ENCODE measurements at regions of chr20 and their contacts with region 1.

Region 1: GRCh38 chr20:3312940-3313682 is 74.1 kb upstream of the SLC4A11 start:
- DNase-seq: no peak
- ATAC-seq: no peak
- H3K4me3 ChIP-seq: no peak overlapping the region
- H3K4me3 Mint-ChIP-seq: no peak overlapping the region
- H3K27ac ChIP-seq: no peak overlapping the region
- H3K27ac Mint-ChIP-seq: no peak overlapping the region
- H3K4me1 ChIP-seq: no peaks in the 10 kb centered on the region
- H3K4me1 Mint-ChIP-seq: peaks cover 0 to 1% (median 0%) of the 10 kb centered on the region in 3 donors
- H3K27me3 ChIP-seq: peaks cover 0 to 3% of the 10 kb centered on the region in 2 experiments
- H3K27me3 Mint-ChIP-seq: no peaks in the 10 kb centered on the region

Region 2: DNA sequence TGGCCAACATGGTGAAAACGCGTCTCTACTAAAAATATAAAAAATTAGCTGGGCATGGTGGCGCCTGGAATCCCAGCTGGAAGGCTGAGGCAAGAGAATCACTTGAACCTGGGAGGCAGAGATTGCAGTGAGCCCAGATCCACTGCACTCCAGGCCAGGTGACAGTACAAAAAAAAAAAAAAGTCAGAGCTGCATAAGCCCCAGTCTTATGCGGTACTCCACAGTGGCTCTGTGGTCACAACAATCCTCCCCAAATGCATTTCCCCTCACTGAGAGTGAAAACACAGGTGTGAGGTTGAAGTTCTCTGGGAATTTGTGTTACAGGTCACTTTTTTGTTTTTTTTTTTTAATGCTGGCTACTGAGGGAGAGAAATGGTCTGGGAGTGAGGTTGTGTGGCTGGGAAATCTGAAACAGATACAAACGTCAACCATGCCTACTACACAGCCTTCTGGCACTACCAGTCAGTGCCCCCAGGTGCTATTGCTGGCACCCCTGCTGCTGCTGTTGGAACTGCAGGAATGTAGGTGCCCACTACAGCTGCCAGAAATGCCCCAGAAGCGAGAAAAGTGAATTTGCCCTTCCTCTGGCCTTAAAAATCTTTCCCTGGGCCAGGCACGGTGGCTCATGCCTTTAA is 261.6 kb before region 1 on chr20:
- CTCF ChIA-PET with region 1: interaction called in 1 of 2 experiments, 21 read pairs
- POLR2A ChIA-PET with region 1: no interaction called
- DNase-seq: no peak
- ATAC-seq: peak in 1 of 4 experiments; percentile 48
- H3K4me3 ChIP-seq: no peak overlapping the region
- H3K4me3 Mint-ChIP-seq: no peak overlapping the region
- H3K27ac ChIP-seq: no peak overlapping the region
- H3K27ac Mint-ChIP-seq: peak overlapping the region in 1 of 2 donors; percentile 44
- H3K4me1 ChIP-seq: peaks cover 4 to 14% of the 10 kb centered on the region in 2 experiments
- H3K4me1 Mint-ChIP-seq: peaks cover 8 to 14% (median 12%) of the 10 kb centered on the region in 3 donors
- H3K27me3 ChIP-seq: no peaks in the 10 kb centered on the region
- H3K27me3 Mint-ChIP-seq: no peaks in the 10 kb centered on the region

Region 3: DNA sequence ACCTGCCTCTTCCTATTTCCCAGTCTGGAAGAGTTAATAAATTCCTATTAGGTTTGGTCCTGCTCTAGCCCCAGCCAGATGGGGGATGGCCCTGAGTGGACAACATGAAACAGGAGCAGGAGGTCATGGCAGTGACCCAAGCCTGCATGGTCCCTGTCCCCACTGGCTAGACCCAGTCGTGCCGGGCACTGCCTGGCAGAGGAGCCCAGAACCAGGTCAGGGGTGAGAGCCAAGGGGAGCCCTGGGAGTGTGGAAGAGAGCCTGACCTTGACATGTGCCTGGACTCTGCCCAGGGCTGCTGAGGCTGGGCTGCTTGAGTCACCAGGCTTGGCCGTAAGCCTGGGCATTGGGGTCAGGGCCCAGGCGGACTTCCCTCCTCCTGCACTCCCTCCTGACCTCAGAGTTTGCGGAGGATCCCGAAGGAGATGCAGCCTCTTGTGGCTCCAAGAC is 232.1 kb before region 1 on chr20:
- CTCF ChIA-PET with region 1: no interaction called
- POLR2A ChIA-PET with region 1: no interaction called
- DNase-seq: no peak
- ATAC-seq: no peak
- H3K4me3 ChIP-seq: no peak overlapping the region
- H3K4me3 Mint-ChIP-seq: peak overlapping the region in 1 of 3 donors; percentile 63
- H3K27ac ChIP-seq: no peak overlapping the region
- H3K27ac Mint-ChIP-seq: no peak overlapping the region
- H3K4me1 ChIP-seq: peaks cover 0 to 25% of the 10 kb centered on the region in 2 experiments
- H3K4me1 Mint-ChIP-seq: peaks cover 19 to 26% (median 25%) of the 10 kb centered on the region in 3 donors
- H3K27me3 ChIP-seq: peaks cover 0 to 52% of the 10 kb centered on the region in 2 experiments
- H3K27me3 Mint-ChIP-seq: peaks cover 18 to 47% of the 10 kb centered on the region in 2 donors

Region 4: GRCh38 chr20:3218307-3218988 is 94.7 kb before region 1 on chr20:
- CTCF ChIA-PET with region 1: interaction called, 4 to 23 read pairs
- POLR2A ChIA-PET with region 1: interaction called in 1 of 2 experiments, 4 read pairs
- DNase-seq: peak; percentile 16 to 81 (median 65)
- ATAC-seq: peak; percentile 60 to 82 (median 72)
- H3K4me3 ChIP-seq: no peak overlapping the region
- H3K4me3 Mint-ChIP-seq: no peak overlapping the region
- H3K27ac ChIP-seq: no peak overlapping the region
- H3K27ac Mint-ChIP-seq: no peak overlapping the region
- H3K4me1 ChIP-seq: peaks cover 7 to 24% of the 10 kb centered on the region in 2 experiments
- H3K4me1 Mint-ChIP-seq: peaks cover 9 to 19% (median 16%) of the 10 kb centered on the region in 3 donors
- H3K27me3 ChIP-seq: no peaks in the 10 kb centered on the region
- H3K27me3 Mint-ChIP-seq: no peaks in the 10 kb centered on the region

Region 5: GRCh38 chr20:3328501-3328900 is 15.4 kb after region 1 on chr20:
- CTCF ChIA-PET with region 1: interaction called, 3 to 11 read pairs
- POLR2A ChIA-PET with region 1: no interaction called
- DNase-seq: peak in 3 of 35 experiments; percentile 4 to 37 (median 4)
- ATAC-seq: peak; percentile 60 to 92 (median 82)
- H3K4me3 ChIP-seq: no peak overlapping the region
- H3K4me3 Mint-ChIP-seq: peak overlapping the region in 2 of 3 donors; percentile 22 to 60
- H3K27ac ChIP-seq: no peak overlapping the region
- H3K27ac Mint-ChIP-seq: peak overlapping the region; percentile 45 to 66
- H3K4me1 ChIP-seq: peaks cover 13 to 19% of the 10 kb centered on the region in 2 experiments
- H3K4me1 Mint-ChIP-seq: peaks cover 18 to 47% (median 24%) of the 10 kb centered on the region in 3 donors
- H3K27me3 ChIP-seq: no peaks in the 10 kb centered on the region
- H3K27me3 Mint-ChIP-seq: no peaks in the 10 kb centered on the region

Region 6: GRCh38 chr20:3413393-3413889 is 100.3 kb after region 1 on chr20:
- CTCF ChIA-PET with region 1: interaction called in 1 of 2 experiments, 11 read pairs
- POLR2A ChIA-PET with region 1: no interaction called
- DNase-seq: no peak
- ATAC-seq: no peak
- H3K4me3 ChIP-seq: no peak overlapping the region
- H3K4me3 Mint-ChIP-seq: no peak overlapping the region
- H3K27ac ChIP-seq: no peak overlapping the region
- H3K27ac Mint-ChIP-seq: no peak overlapping the region
- H3K4me1 ChIP-seq: peaks cover 4 to 7% of the 10 kb centered on the region in 2 experiments
- H3K4me1 Mint-ChIP-seq: peaks cover 4 to 6% (median 5%) of the 10 kb centered on the region in 3 donors
- H3K27me3 ChIP-seq: peaks cover 0 to 4% of the 10 kb centered on the region in 2 experiments
- H3K27me3 Mint-ChIP-seq: no peaks in the 10 kb centered on the region

Measured in T-cell (primary cell).